GM23248 (cell line): ENCODE measurements at regions of chr16 and their contacts with region 1.

Region 1: DNA sequence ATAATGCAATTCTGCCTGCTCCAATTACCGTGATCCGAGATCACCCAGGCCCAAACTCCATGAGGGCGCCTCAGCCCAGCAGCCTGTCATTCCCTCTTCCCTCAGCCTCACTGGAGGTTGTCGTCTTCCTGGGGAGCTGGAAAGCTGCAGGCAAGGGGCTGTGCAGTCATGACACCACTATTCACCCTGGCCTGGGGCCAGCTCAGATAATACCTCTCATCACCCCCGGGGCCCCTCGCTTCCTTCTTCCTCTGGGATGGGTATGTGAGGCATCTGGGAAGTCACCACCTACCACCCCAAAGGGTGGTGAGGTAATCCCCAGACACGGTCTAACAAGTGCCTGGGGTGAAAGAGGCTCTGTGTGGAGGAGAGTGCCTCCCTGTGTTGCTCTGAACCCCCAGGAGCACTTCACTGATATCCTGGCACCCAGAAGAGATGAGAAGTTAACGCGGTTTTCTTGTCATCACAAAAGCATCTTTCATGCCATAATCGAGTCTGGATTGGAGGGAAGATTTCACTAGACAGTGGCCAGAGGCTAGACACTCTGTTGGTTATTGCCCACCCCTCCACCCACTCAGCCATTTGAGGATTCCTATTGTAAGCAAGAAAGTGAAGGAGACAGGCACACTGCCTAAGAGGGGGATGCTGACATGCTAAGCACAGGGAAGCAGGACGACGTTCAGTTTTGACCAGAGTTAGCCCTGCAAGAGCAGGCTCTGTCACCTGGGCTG is 18.4 kb downstream of the CFAP20 start:
- DNase-seq: peak; percentile 42
- H3K4me3 ChIP-seq: no peak overlapping the region
- H3K27ac ChIP-seq: no peak overlapping the region
- H3K4me1 ChIP-seq: peaks cover 8% of the 10 kb centered on the region
- H3K27me3 ChIP-seq: no peaks in the 10 kb centered on the region

Region 2: GRCh38 chr16:58032710-58033293 is 77.9 kb before region 1 on chr16:
- in situ Hi-C with region 1: loop called (anchors 10 kb)
- DNase-seq: no peak
- H3K4me3 ChIP-seq: no peak overlapping the region
- H3K27ac ChIP-seq: no peak overlapping the region
- H3K4me1 ChIP-seq: no peaks in the 10 kb centered on the region
- H3K27me3 ChIP-seq: no peaks in the 10 kb centered on the region